Activated CD4-positive, alpha-beta memory T cell treated with anti-CD3 and anti-CD28 coated beads for 36 hours (primary cell): ENCODE measurements at regions of chr9 and their contacts with region 1.

Region 1: DNA sequence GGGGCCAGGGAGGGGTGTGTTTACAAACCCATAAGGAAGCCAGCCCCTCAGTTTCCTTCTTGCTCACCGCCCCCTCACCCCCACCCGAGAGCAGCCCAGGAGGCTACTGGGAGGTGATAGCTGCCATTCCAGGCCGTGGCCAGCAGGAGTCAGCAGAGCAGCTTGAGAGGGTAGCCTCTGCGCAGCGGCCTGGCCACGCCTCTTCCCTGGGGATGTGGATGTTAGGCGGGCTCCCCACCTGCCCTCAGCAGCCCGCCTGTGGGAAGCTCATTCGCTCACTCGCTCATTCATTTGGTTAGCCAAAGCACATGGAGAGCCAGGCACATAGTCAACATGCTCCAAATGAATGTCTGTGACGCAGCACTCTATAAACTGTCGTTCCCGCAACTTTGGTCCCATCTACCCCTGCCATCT is 6.1 kb upstream of the DPM2 start:
- DNase-seq: peak; percentile 87
- H3K4me3 Mint-ChIP-seq: no peak overlapping the region
- H3K27ac Mint-ChIP-seq: peak overlapping the region; percentile 61
- H3K4me1 Mint-ChIP-seq: peaks cover 18% of the 10 kb centered on the region
- H3K27me3 Mint-ChIP-seq: no peaks in the 10 kb centered on the region

Region 2: GRCh38 chr9:127862075-127863011 is 81.4 kb before region 1 on chr9:
- CTCF ChIA-PET with region 1: no interaction called
- POLR2A ChIA-PET with region 1: no interaction called
- intact Hi-C with region 1: no loop called
- DNase-seq: peak; percentile 56
- H3K4me3 Mint-ChIP-seq: no peak overlapping the region
- H3K27ac Mint-ChIP-seq: peak overlapping the region; percentile 71
- H3K4me1 Mint-ChIP-seq: peaks cover 36% of the 10 kb centered on the region
- H3K27me3 Mint-ChIP-seq: no peaks in the 10 kb centered on the region

Region 3: GRCh38 chr9:127955294-127956035 is 11.7 kb after region 1 on chr9:
- CTCF ChIA-PET with region 1: interaction called, 120 read pairs
- POLR2A ChIA-PET with region 1: interaction called, 7 read pairs
- intact Hi-C with region 1: no loop called
- DNase-seq: peak; percentile 95
- H3K4me3 Mint-ChIP-seq: peak overlapping the region; percentile 30
- H3K27ac Mint-ChIP-seq: peak overlapping the region; percentile 92
- H3K4me1 Mint-ChIP-seq: peaks cover 80% of the 10 kb centered on the region
- H3K27me3 Mint-ChIP-seq: no peaks in the 10 kb centered on the region

Region 4: GRCh38 chr9:127980706-127981558 is 37.2 kb after region 1 on chr9 and contains the start of gene EEIG1:
- CTCF ChIA-PET with region 1: interaction called, 106 read pairs
- POLR2A ChIA-PET with region 1: interaction called, 3 read pairs
- intact Hi-C with region 1: no loop called
- DNase-seq: peak; percentile 98
- H3K4me3 Mint-ChIP-seq: peak within 1 kb of the TSS; percentile 96
- H3K27ac Mint-ChIP-seq: peak within 1 kb of the TSS; percentile 93
- H3K4me1 Mint-ChIP-seq: peaks cover 43% of the 10 kb centered on the region
- H3K27me3 Mint-ChIP-seq: no peaks in the 10 kb centered on the region
- total RNA-seq, gene EEIG1: 50.7 to 58.0 TPM

Region 5: DNA sequence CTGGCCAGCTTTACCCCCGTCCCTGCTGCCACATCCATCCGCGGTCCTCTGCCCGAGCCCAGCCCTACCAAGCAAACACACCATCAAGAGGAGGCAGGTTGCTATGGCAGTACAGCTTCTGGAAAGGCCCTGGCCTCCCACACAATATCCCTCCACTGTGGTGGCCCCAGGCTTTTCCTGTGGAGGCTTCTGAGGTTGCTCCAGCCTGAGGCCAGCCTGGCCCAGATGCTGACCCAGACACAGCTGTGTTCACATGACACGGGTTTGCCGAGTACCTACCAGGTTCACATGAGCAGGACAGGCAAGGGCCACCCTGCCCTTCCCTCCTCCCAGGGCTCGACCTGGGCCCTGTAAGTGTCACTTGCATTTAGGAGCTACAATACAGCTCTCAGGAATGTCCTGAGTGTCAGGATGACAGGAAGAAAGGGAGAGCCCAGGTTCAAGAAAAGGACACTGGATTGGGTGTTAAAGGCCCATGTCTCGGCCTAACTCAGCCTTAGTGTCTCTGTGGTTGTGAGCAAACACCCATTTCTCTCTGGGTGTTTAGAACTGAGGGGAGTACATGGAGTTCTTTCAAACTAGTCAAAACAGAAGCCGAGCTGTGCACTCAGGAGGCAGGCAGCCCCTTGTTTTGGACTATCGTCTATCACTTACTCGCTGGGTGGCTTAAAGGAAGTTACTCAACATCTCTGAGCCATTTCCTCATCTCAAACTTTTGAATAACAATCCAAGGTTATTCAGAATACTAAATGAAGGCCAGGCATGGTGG is 83.2 kb after region 1 on chr9:
- CTCF ChIA-PET with region 1: interaction called, 347 read pairs
- POLR2A ChIA-PET with region 1: interaction called, 3 read pairs
- intact Hi-C with region 1: no loop called
- DNase-seq: peak; percentile 75
- H3K4me3 Mint-ChIP-seq: peak overlapping the region; percentile 66
- H3K27ac Mint-ChIP-seq: peak overlapping the region; percentile 93
- H3K4me1 Mint-ChIP-seq: peaks cover 89% of the 10 kb centered on the region
- H3K27me3 Mint-ChIP-seq: peaks cover 2% of the 10 kb centered on the region

Region 6: GRCh38 chr9:128062846-128063401 is 119.2 kb after region 1 on chr9:
- CTCF ChIA-PET with region 1: interaction called, 22 read pairs
- POLR2A ChIA-PET with region 1: no interaction called
- intact Hi-C with region 1: no loop called
- DNase-seq: no peak
- H3K4me3 Mint-ChIP-seq: no peak overlapping the region
- H3K27ac Mint-ChIP-seq: no peak overlapping the region
- H3K4me1 Mint-ChIP-seq: peaks cover 49% of the 10 kb centered on the region
- H3K27me3 Mint-ChIP-seq: no peaks in the 10 kb centered on the region

Region 7: GRCh38 chr9:128078504-128079434 is 135.0 kb after region 1 on chr9:
- CTCF ChIA-PET with region 1: interaction called, 14 read pairs
- POLR2A ChIA-PET with region 1: no interaction called
- intact Hi-C with region 1: no loop called
- DNase-seq: no peak
- H3K4me3 Mint-ChIP-seq: no peak overlapping the region
- H3K27ac Mint-ChIP-seq: peak overlapping the region; percentile 70
- H3K4me1 Mint-ChIP-seq: peaks cover 44% of the 10 kb centered on the region
- H3K27me3 Mint-ChIP-seq: no peaks in the 10 kb centered on the region

Region 8: DNA sequence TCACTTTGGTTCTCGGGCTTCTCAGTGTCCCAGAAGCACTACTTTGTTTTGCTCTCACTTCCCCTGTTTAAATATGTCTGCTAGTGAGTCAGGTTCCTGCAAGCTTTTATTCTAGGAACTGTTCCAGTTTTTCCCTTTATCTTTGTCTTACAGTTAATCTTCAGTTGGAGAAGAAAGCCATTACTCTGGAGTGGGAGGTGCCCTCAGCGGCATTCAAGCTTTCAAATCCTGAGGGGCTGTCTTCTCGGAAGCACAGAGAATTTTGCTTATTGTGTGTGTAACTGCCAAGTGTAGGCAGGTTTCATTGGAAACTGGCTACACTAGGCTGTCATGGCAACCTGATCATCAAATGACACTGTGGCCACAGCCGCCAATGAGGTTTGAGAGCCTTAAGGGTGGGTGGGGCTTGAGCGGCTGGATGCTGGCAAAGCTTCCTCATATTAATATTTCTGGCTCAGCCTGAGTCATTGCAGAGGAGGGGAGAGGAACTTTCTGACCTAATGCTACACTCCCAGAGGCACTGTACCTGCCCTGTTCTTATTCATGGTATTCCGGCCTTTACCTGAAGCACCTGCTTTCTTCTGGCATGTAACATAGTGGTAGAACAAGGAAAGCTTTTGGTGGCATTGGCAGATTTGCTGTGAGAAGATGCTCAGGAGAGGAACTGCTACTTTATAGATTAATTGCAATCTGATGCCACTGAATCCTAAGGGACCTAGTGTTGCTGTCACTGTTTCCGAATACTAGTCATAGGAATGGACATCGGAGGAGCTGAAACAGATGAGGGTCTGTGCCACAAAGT is 150.6 kb after region 1 on chr9:
- CTCF ChIA-PET with region 1: interaction called, 33 read pairs
- POLR2A ChIA-PET with region 1: no interaction called
- intact Hi-C with region 1: no loop called
- DNase-seq: peak; percentile 93
- H3K4me3 Mint-ChIP-seq: peak overlapping the region; percentile 54
- H3K27ac Mint-ChIP-seq: peak overlapping the region; percentile 96
- H3K4me1 Mint-ChIP-seq: peaks cover 84% of the 10 kb centered on the region
- H3K27me3 Mint-ChIP-seq: no peaks in the 10 kb centered on the region

Region 9: DNA sequence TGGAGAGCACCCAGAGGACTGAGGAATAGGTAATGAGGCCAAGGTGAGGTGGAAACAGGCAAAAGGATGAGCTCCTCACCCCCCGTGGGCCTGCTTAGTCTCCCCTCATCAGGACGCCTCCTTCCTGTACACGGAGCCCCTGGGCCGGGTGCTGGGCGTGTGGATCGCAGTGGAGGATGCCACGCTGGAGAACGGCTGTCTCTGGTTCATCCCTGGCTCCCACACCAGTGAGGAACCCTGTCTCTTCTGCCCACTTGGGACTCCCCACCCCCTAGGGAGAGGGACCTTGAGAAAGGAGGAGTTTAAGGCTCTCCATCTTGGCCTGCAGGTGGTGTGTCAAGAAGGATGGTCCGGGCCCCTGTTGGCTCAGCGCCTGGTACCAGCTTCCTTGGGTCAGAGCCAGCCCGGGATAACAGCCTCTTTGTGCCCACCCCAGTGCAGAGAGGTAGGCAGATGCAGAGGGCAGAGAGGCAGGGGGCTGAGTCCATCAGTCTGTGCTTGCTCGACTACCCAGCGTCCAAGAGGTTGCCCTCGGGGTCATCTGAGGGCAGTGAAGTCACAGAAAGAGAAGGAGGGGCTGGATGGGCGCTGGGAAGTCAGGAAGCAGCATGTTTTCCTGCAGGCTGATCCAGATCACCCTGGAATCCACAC is 996.7 kb after region 1 on chr9:
- CTCF ChIA-PET with region 1: no interaction called
- POLR2A ChIA-PET with region 1: no interaction called
- intact Hi-C with region 1: no loop called
- DNase-seq: no peak
- H3K4me3 Mint-ChIP-seq: no peak overlapping the region
- H3K27ac Mint-ChIP-seq: no peak overlapping the region
- H3K4me1 Mint-ChIP-seq: peaks cover 2% of the 10 kb centered on the region
- H3K27me3 Mint-ChIP-seq: no peaks in the 10 kb centered on the region